ENCODE measurements at regions of chr17 and their contacts with region 1.

Region 1: GRCh38 chr17:49575579-49576087 is at the start of gene NXPH3:
- DNase-seq: peak; percentile 68

Region 2: DNA sequence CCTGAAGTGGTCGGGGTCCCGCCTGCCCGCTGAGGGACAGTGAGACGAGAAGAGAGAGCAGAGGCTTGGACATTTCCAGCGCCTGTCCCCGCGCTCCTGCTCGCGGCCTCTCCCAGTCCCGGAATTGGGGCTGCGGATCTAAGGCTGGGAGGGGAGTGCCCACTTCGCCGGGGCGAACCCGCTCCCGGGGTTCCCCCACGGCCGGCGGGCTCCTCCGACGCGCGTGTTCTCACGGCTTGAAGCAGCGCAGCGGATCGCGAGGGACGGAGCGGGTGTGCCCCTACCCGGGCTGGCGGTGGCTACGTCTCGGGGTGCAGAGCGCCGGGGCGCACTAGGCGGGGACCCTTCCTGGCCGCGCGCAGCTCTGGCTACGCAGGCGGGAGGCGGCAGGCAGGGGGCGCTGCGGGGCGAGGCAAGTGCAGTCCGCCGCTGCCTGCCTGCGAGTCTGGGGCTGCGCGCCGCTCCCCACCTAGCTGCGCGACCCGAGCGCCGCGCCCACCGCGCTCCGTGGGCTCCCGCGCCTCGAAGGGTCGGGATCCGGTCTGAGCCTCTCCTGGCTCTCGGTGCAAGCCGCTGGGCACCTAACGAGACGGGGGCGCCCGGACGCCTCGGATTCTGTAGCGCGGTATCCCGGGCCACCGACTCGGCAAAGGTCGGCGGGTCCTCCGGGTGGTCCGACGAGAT is 79.3 kb before region 1 on chr17:
- in situ Hi-C with region 1: no loop called
- DNase-seq: peak; percentile 56

Region 3: DNA sequence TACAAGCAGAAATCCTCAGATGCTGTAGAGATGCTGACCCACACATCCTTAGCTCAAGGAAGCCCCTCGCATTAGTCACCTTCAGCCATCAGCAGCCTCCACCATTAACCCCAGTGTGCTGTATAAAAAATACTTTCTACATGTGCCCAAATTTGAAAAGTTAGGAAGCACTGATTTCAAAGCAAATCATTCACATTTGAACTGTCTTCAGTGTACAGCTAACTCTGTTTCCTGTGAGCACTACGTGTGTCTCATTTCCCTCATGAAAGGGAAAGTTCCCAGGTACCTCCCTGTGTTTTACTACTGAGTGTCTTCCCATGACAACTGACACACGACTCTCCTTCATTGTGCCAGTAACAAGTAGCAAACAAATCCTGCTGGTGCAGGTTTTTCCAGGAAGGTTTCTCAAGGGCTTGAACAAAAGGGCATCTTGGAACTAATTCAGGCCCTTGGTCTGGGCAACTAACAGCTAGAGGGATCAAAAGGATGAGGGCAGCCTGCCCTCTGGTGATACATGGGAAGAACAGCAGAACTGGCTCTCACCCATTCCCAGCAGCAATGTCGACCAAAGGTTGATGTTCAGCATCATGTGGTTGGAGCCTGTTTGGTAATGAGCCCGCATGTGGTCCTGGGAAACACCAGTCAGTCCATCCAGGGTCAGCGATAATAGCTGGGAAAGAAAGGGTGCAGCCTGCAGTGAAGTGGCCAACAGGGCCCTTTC is 128.1 kb after region 1 on chr17:
- in situ Hi-C with region 1: loop called (anchors 5 kb)
- DNase-seq: peak; percentile 51

Region 4: GRCh38 chr17:49843774-49844350 is 268.2 kb after region 1 on chr17:
- in situ Hi-C with region 1: loop called (anchors 10 kb)
- DNase-seq: peak; percentile 62

Measured in KBM-7 (cell line).